Transverse colon (tissue), 4 donors: ENCODE measurements at regions of chr18 and their contacts with region 1.

Region 1: GRCh38 chr18:74353169-74353775 is 37.6 kb downstream of the C18orf63 start:
- DNase-seq: peak; percentile 62
- H3K4me3 ChIP-seq: no peak overlapping the region
- H3K27ac ChIP-seq: no peak overlapping the region
- H3K4me1 ChIP-seq: peaks cover 0 to 20% (median 0%) of the 10 kb centered on the region in 4 donors
- H3K27me3 ChIP-seq: no peaks in the 10 kb centered on the region
- CTCF ChIP-seq: peak; percentile 64 to 86 (median 67)
- EP300 ChIP-seq: no peak
- POLR2A ChIP-seq: no peak

Region 2: GRCh38 chr18:73352546-73352945 is 1000.7 kb before region 1 on chr18:
- in situ Hi-C with region 1: no loop called
- intact Hi-C with region 1: no loop called
- DNase-seq: no peak
- H3K4me3 ChIP-seq: no peak overlapping the region
- H3K27ac ChIP-seq: no peak overlapping the region
- H3K4me1 ChIP-seq: no peaks in the 10 kb centered on the region
- H3K27me3 ChIP-seq: no peaks in the 10 kb centered on the region
- CTCF ChIP-seq: no peak
- EP300 ChIP-seq: no peak
- POLR2A ChIP-seq: no peak

Region 3: DNA sequence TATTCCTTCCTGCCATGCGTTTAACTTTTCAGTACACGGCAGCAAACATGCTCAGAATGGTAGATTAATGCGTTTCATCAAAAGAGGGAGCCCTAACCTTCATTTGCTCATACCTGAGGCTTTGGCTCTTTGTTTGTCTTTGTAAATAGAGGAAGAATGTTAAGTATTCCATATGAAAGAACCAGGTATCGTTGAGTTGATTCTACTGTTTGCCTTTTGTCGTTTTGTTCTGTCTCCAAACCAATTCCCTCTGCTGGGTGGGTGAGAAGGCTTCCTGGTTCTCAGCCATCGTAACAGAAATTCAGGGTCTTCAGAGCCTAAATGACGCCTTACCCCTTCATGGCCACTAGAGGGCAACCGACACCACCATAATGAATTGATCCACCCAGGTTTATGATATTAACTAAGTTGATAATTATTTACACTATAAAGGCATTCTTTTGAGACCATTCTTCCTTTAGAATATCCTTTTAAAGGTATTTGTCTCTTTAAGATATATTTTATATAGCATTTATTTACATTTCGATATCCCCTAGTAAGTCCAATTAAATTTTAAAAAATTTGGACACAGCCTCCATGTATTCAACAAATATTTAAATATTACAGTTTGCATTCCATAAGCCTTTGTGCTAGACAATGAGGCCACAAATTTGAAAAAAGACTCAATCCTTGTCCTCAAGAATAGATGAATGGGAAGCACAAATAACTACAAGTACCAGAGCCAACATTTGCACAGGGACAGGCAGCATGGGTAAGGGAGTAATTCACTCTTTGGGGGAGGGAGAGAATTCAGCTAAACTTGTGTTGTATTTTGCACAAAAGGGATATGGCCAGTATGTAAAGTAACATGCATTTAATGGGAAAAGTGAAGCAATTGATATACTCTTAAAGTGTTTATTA is 156.8 kb before region 1 on chr18:
- in situ Hi-C with region 1: loop called in 3 of 4 experiments (anchors 5 to 10 kb)
- intact Hi-C with region 1: no loop called
- DNase-seq: peak; percentile 39
- H3K4me3 ChIP-seq: peak overlapping the region in 3 of 4 donors; percentile 11 to 41 (median 19)
- H3K27ac ChIP-seq: peak overlapping the region in 2 of 4 donors; percentile 30 to 32
- H3K4me1 ChIP-seq: peaks cover 0 to 24% (median 10%) of the 10 kb centered on the region in 4 donors
- H3K27me3 ChIP-seq: no peaks in the 10 kb centered on the region
- CTCF ChIP-seq: peak; percentile 89 to 97 (median 95)
- EP300 ChIP-seq: no peak
- POLR2A ChIP-seq: no peak

Region 4: GRCh38 chr18:74489676-74490075 is 136.4 kb after region 1 on chr18:
- in situ Hi-C with region 1: loop called (anchors 5 to 10 kb)
- intact Hi-C with region 1: loop called (anchors 10 kb)
- DNase-seq: no peak
- H3K4me3 ChIP-seq: no peak overlapping the region
- H3K27ac ChIP-seq: no peak overlapping the region
- H3K4me1 ChIP-seq: peaks cover 5 to 11% (median 7%) of the 10 kb centered on the region in 4 donors
- H3K27me3 ChIP-seq: no peaks in the 10 kb centered on the region
- CTCF ChIP-seq: no peak
- EP300 ChIP-seq: no peak
- POLR2A ChIP-seq: no peak

Region 5: GRCh38 chr18:74495581-74496507 is 142.6 kb after region 1 on chr18 and contains the start of gene CNDP2:
- in situ Hi-C with region 1: loop called in 3 of 4 experiments (anchors 5 to 10 kb)
- intact Hi-C with region 1: loop called (anchors 10 kb)
- DNase-seq: peak; percentile 100
- H3K4me3 ChIP-seq: peak within 1 kb of the TSS; percentile 70 to 94 (median 80)
- H3K27ac ChIP-seq: peak within 1 kb of the TSS; percentile 90 to 95 (median 94)
- H3K4me1 ChIP-seq: peaks cover 9 to 39% (median 27%) of the 10 kb centered on the region in 4 donors
- H3K27me3 ChIP-seq: no peaks in the 10 kb centered on the region
- CTCF ChIP-seq: no peak
- EP300 ChIP-seq: no peak
- POLR2A ChIP-seq: peak; percentile 86
- total RNA-seq, gene CNDP2: 143 to 284 (median 155) TPM

Region 6: DNA sequence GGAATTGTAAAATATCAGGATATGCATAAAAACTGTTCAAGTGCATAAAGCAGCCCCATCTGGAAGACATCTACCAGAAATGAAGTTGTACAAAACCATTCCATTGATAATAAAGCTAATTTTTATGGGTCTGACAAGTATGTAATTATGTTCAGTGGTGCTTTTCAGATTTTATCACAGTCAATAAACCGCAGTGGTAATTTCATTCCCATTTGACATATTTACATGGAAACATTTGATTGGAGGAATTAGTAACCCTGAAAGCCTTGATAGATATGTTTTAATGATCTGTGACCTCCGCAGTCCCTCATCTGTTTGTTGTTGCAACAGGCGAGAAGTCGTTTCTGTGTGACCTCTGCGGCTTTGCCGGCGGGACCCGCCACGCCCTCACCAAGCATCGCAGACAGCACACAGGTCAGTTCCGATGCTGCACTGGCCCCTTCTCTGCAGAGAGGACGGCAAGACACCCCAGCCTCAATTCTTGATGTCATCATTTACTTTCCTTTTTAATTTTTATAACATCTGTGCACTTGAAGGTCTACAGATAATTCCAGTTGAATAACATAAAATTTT is 527.5 kb after region 1 on chr18:
- in situ Hi-C with region 1: no loop called
- intact Hi-C with region 1: no loop called
- DNase-seq: no peak
- H3K4me3 ChIP-seq: no peak overlapping the region
- H3K27ac ChIP-seq: no peak overlapping the region
- H3K4me1 ChIP-seq: no peaks in the 10 kb centered on the region
- H3K27me3 ChIP-seq: no peaks in the 10 kb centered on the region
- CTCF ChIP-seq: no peak
- EP300 ChIP-seq: no peak
- POLR2A ChIP-seq: no peak